Panc1 (cell line): ENCODE measurements at regions of chr5 and their contacts with region 1.

Region 1: DNA sequence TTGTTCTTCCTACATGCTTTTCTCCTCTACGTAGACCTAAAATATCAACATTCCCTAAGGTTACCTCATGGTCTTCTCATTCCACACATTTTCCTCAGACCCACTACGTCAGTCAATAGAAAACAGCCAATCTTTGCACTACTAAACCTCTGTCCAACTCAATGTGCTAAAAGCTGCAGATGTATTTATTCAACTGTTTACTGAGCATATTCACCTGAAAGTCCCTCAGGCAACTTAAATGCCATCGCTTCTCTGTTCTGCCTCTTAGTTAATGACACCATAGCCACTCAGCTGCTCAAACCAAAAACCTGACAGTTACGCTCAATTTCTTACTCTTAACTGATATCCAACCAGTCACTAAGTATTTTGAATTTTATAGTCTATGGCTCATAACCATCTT is 75.1 kb downstream of the SSBP2 start:
- DNase-seq: no peak
- ATAC-seq: no peak
- H3K4me3 ChIP-seq: no peak overlapping the region
- H3K27ac ChIP-seq: no peak overlapping the region
- H3K4me1 ChIP-seq: no peaks in the 10 kb centered on the region
- H3K27me3 ChIP-seq: no peaks in the 10 kb centered on the region
- CTCF ChIP-seq: no peak

Region 2: GRCh38 chr5:81435023-81435422 is 240.8 kb before region 1 on chr5:
- CTCF ChIA-PET with region 1: interaction called, 15 read pairs
- POLR2A ChIA-PET with region 1: no interaction called
- in situ Hi-C with region 1: no loop called
- intact Hi-C with region 1: no loop called
- DNase-seq: no peak
- ATAC-seq: no peak
- H3K4me3 ChIP-seq: no peak overlapping the region
- H3K27ac ChIP-seq: no peak overlapping the region
- H3K4me1 ChIP-seq: no peaks in the 10 kb centered on the region
- H3K27me3 ChIP-seq: no peaks in the 10 kb centered on the region
- CTCF ChIP-seq: no peak